ENCODE measurements at regions of chr3 and their contacts with region 1.

Region 1: GRCh38 chr3:72847751-72848702 is at the start of gene SHQ1:
- DNase-seq: peak; percentile 92
- H3K4me3 Mint-ChIP-seq: peak within 1 kb of the TSS; percentile 99
- H3K27ac Mint-ChIP-seq: peak within 1 kb of the TSS; percentile 88
- H3K4me1 Mint-ChIP-seq: peaks cover 62% of the 10 kb centered on the region
- H3K27me3 Mint-ChIP-seq: peaks cover 9% of the 10 kb centered on the region
- total RNA-seq, gene SHQ1: 46.1 and 48.5 TPM in 2 replicates

Region 2: GRCh38 chr3:71875461-71875947 is 972.5 kb before region 1 on chr3:
- intact Hi-C with region 1: loop called (anchors 1 kb)
- DNase-seq: peak; percentile 67
- H3K4me3 Mint-ChIP-seq: no peak overlapping the region
- H3K27ac Mint-ChIP-seq: peak overlapping the region; percentile 59
- H3K4me1 Mint-ChIP-seq: peaks cover 38% of the 10 kb centered on the region
- H3K27me3 Mint-ChIP-seq: peaks cover 8% of the 10 kb centered on the region

Region 3: GRCh38 chr3:72702390-72702789 is 145.6 kb before region 1 on chr3:
- intact Hi-C with region 1: no loop called
- DNase-seq: no peak
- H3K4me3 Mint-ChIP-seq: no peak overlapping the region
- H3K27ac Mint-ChIP-seq: no peak overlapping the region
- H3K4me1 Mint-ChIP-seq: no peaks in the 10 kb centered on the region
- H3K27me3 Mint-ChIP-seq: no peaks in the 10 kb centered on the region

Region 4: DNA sequence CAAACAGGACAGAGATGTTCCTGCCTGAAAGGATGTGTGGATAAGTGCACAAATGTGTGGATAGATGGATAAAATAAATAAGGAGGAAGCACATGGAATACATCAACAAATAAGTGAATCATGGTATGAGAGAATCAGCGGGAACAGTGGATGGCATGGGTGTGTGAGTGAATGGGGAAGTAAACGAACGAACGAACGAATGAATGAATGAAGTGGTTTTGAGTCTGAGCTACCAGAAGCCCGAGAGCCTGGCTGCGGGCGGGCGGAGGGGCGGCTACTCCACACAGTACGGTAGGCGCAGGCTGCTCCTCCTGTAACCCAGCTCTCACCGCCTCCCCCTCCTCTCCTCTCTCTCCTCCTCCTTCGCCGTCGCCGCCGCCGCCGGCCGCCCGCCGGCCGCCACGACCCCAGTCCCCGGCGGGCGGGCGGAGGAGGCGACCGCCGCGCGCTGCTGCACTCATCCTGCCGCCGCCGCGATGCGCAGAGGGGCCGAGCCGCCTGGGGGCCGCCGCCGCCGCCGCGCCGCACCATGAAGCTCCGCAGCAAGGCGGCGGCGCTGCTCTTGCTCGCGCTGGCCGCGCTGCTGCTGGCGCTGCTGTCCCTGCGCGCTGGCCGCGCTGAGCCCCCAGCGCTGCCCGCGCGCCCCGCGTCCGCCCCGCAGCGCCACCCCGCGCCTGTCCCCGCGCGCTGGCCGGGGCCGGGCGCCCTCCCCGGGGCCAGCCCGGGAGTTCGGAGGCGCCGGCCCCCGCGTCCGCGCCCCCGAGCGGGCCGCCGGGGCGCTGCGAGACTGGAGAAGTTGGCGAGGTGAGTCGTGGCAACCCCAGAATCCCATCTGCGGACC is 39.9 kb after region 1 on chr3 and contains the start of gene GXYLT2:
- intact Hi-C with region 1: loop called (anchors 2 kb)
- DNase-seq: peak; percentile 11
- H3K4me3 Mint-ChIP-seq: peak within 1 kb of the TSS; percentile 81
- H3K27ac Mint-ChIP-seq: no peak within 1 kb of the TSS
- H3K4me1 Mint-ChIP-seq: peaks cover 10% of the 10 kb centered on the region
- H3K27me3 Mint-ChIP-seq: peaks cover 62% of the 10 kb centered on the region
- total RNA-seq, gene GXYLT2: 0.08 TPM in 1 of 2 replicates, not detected in the other

Region 5: DNA sequence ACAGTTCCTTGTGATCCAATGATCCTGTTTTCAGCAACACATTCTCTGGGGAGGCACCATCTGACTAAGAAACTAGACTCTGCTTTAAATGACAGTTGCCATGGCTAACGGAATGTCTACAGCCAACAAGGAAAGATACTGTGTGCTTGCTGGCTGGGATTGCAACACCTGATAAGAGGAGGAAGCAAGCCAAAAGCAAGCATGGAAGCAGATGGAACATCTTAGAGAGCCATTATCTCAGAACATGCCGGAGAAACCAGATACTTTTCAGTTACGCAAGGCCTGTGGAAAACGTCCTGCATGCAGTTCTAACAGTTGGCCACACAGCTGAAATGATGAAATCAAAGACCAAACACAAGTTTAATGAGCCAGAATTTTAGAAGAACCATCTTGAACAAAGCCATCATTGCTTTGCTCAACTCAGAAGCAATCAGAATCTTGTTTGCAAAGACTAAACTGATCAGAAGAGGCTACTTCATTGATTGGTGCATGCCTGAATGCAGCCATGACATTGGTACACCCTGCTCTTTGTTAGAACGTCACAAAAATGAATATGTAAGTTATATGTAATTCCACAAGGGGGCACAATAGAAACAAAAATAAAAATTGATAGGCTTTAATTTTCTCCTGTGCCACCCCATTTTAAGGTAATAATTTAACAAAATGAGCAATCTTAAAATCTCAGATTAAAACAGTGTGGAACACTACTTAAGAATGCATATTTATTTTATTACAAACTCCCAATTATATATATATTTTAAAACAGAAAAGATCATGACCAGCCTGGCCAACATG is 90.6 kb after region 1 on chr3:
- intact Hi-C with region 1: loop called (anchors 2 kb)
- DNase-seq: no peak
- H3K4me3 Mint-ChIP-seq: no peak overlapping the region
- H3K27ac Mint-ChIP-seq: no peak overlapping the region
- H3K4me1 Mint-ChIP-seq: no peaks in the 10 kb centered on the region
- H3K27me3 Mint-ChIP-seq: peaks cover 10% of the 10 kb centered on the region

Region 6: DNA sequence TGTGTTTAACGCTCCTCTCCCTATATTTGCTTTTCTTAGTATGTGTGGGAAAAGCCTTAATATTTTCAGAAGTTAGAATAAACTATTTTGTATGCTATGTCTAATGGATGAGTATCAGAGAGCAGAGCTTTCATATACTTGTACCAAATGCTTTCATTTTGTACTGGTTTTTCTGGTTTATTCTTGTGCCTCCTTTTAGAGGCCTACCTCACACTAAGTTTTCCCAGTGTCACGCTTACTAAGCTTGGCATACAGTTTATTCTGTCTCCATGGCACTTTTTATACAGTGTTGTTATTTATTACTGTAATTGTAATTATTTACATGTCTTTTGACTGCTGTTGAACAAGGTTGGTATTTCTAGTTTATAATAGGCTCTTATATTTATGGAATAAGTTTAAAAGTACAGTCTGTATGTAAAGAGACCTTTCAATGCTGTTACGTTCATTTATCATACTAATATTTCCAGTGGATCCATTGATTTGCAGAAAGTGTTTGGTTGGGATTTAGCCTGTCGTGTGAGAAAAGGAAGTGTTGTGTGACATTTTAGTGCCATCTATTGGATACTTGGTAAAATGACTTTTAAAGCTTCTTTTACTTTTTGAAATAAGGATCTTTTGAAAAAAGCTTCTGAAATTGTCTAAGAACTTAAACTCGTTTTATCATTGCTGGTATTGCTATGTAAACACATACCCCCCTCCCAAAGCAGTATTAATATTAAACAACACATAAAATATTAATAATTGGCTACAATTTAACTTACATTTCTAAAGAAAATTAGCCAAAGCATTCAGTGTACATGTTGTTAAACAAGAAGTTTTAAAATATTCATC is 208.2 kb after region 1 on chr3:
- intact Hi-C with region 1: loop called (anchors 1 kb)
- DNase-seq: no peak
- H3K4me3 Mint-ChIP-seq: no peak overlapping the region
- H3K27ac Mint-ChIP-seq: no peak overlapping the region
- H3K4me1 Mint-ChIP-seq: peaks cover 16% of the 10 kb centered on the region
- H3K27me3 Mint-ChIP-seq: no peaks in the 10 kb centered on the region

Region 7: GRCh38 chr3:73086071-73086494 is 238.1 kb after region 1 on chr3:
- intact Hi-C with region 1: loop called (anchors 1 kb)
- DNase-seq: peak; percentile 16
- H3K4me3 Mint-ChIP-seq: no peak overlapping the region
- H3K27ac Mint-ChIP-seq: no peak overlapping the region
- H3K4me1 Mint-ChIP-seq: peaks cover 9% of the 10 kb centered on the region
- H3K27me3 Mint-ChIP-seq: peaks cover 5% of the 10 kb centered on the region

Measured in activated T-helper 1 cell treated with anti-CD3 and anti-CD28 coated beads, Interleukin-12 subunit alpha, Interleukin-12 subunit beta, Interleukin-2, Interleukin-4 antibody, amounts not matched to agents 30 ng/mL and 10 ng/mL and 1 ng/mL, durations not matched to agents 14 hours and 24 hours and 36 hours (primary cell).